H1 (cell line): ENCODE measurements at regions of chr3 and their contacts with region 1.

Region 1: GRCh38 chr3:29668728-29669127 is 387.9 kb downstream of the RBMS3 start:
- DNase-seq: no peak
- H3K4me3 ChIP-seq: no peak overlapping the region
- H3K27ac ChIP-seq: no peak overlapping the region
- H3K4me1 ChIP-seq: no peaks in the 10 kb centered on the region
- H3K27me3 ChIP-seq: no peaks in the 10 kb centered on the region
- CTCF ChIP-seq: peak in 2 of 3 experiments; percentile 18 to 66; a peak in 1 of 4 replicates
- EP300 ChIP-seq: no peak
- POLR2A ChIP-seq: no peak
- RAD21 ChIP-seq: peak; percentile 61 to 68

Region 2: GRCh38 chr3:29335438-29335837 is 333.3 kb before region 1 on chr3:
- CTCF ChIA-PET with region 1: no interaction called
- POLR2A ChIA-PET with region 1: no interaction called
- DNase-seq: no peak
- H3K4me3 ChIP-seq: no peak overlapping the region
- H3K27ac ChIP-seq: no peak overlapping the region
- H3K4me1 ChIP-seq: peaks cover 0 to 4% (median 1%) of the 10 kb centered on the region in 4 experiments; a peak in 2 of 7 replicates
- H3K27me3 ChIP-seq: no peaks in the 10 kb centered on the region
- CTCF ChIP-seq: no peak
- EP300 ChIP-seq: no peak
- POLR2A ChIP-seq: no peak
- RAD21 ChIP-seq: no peak

Region 3: DNA sequence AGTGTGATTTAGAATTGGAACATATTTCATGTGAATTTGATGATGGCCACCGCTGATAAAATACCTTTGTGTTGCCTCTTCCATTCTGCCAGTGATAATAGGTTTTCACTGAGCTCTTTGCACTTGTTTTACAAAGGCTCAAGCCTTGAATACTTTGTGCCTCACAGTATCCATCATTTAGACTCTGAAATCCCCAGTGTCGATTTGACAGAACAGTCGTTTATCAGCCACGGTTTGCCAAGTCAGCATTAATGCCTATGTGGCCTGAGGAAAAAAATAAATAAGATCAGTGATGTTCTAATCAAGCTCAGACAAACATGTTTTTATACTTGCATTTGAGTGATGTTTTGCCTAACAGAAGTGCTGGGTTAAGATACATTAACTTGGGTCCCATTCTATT is 11.2 kb after region 1 on chr3:
- CTCF ChIA-PET with region 1: interaction called, 25 read pairs
- POLR2A ChIA-PET with region 1: no interaction called
- DNase-seq: no peak
- H3K4me3 ChIP-seq: no peak overlapping the region
- H3K27ac ChIP-seq: no peak overlapping the region
- H3K4me1 ChIP-seq: no peaks in the 10 kb centered on the region
- H3K27me3 ChIP-seq: no peaks in the 10 kb centered on the region
- CTCF ChIP-seq: no peak
- EP300 ChIP-seq: no peak
- POLR2A ChIP-seq: no peak
- RAD21 ChIP-seq: no peak